CD14-positive monocyte (primary cell): ENCODE measurements at regions of chr20 and their contacts with region 1.

Region 1: GRCh38 chr20:32585011-32585518 is at the start of gene NOL4L:
- DNase-seq: peak in 1 of 3 donors; percentile 35
- H3K4me3 ChIP-seq: peak within 1 kb of the TSS; percentile 37 to 79 (median 74)
- H3K4me3 Mint-ChIP-seq: peak within 1 kb of the TSS; percentile 84 to 96
- H3K27ac ChIP-seq: no peak within 1 kb of the TSS
- H3K27ac Mint-ChIP-seq: peak within 1 kb of the TSS in 4 of 7 donors; percentile 21 to 66 (median 34)
- H3K4me1 ChIP-seq: peaks cover 42 to 47% of the 10 kb centered on the region in 2 donors
- H3K4me1 Mint-ChIP-seq: peaks cover 45% of the 10 kb centered on the region
- H3K27me3 ChIP-seq: peaks cover 6 to 24% of the 10 kb centered on the region in 2 donors
- H3K27me3 Mint-ChIP-seq: peaks cover 26 to 39% (median 33%) of the 10 kb centered on the region in 3 donors
- CTCF ChIP-seq: no peak
- polyA plus RNA-seq, gene NOL4L: 1.1 to 30.9 (median 2.8) TPM

Region 2: GRCh38 chr20:32437391-32438074 is 147.5 kb before region 1 on chr20:
- intact Hi-C with region 1: no loop called
- DNase-seq: peak in 1 of 3 donors; percentile 23
- H3K4me3 ChIP-seq: no peak overlapping the region
- H3K4me3 Mint-ChIP-seq: no peak overlapping the region
- H3K27ac ChIP-seq: no peak overlapping the region
- H3K27ac Mint-ChIP-seq: peak overlapping the region in 1 of 7 donors; percentile 77
- H3K4me1 ChIP-seq: no peaks in the 10 kb centered on the region
- H3K4me1 Mint-ChIP-seq: no peaks in the 10 kb centered on the region
- H3K27me3 ChIP-seq: no peaks in the 10 kb centered on the region
- H3K27me3 Mint-ChIP-seq: no peaks in the 10 kb centered on the region
- CTCF ChIP-seq: no peak

Region 3: DNA sequence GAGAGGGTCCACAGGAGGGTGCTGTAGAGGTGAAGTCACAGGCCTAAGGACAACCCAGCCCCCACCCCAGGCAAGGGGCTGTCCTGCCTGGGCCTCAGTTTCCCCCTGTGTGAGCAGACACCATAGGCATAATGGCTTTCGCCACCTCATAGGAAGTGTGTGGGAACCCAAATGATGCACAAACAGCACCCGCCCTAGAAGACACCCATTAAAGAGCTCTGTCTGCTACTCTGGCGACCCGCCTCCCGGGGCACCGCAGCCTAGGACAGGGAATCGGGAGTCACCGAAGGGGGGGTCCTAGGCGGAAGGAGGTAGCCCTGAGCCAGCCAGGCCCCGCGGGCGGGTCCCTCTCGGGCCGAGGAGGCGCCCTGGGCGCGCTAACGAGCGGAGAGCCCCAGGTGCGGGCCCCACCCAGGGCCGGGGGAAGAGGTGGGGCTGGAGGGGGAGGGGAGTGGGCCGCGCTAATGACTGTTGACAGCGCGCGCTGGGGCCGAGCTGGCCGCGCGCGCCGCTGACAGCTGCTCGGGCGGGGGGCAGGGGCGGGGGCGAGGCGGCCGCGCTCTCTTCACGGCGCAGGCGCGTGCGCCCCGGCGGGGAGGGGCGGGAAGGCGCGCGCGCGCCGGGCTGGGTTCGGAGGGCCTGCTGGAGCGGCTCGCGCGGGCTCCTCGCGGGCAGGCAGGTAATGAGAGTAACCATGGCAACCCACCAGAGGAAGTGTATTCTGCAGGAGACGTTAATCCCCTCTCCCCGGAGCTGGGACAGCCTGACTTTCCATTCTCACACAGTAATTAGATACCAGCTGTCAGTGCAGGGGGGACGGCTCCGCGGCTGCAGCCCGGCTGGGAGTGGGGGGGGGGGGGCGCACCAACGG is 48.9 kb before region 1 on chr20:
- intact Hi-C with region 1: loop called in 1 of 2 experiments (anchors 5 kb)
- DNase-seq: peak in 1 of 3 donors; percentile 33
- H3K4me3 ChIP-seq: peak overlapping the region; percentile 20 to 73 (median 36)
- H3K4me3 Mint-ChIP-seq: peak overlapping the region; percentile 75 to 78
- H3K27ac ChIP-seq: no peak overlapping the region
- H3K27ac Mint-ChIP-seq: peak overlapping the region in 1 of 7 donors; percentile 58
- H3K4me1 ChIP-seq: peaks cover 46 to 56% of the 10 kb centered on the region in 2 donors
- H3K4me1 Mint-ChIP-seq: peaks cover 55% of the 10 kb centered on the region
- H3K27me3 ChIP-seq: no peaks in the 10 kb centered on the region
- H3K27me3 Mint-ChIP-seq: peaks cover 2 to 20% (median 8%) of the 10 kb centered on the region in 3 donors
- CTCF ChIP-seq: no peak

Region 4: GRCh38 chr20:32605167-32605656 is 20.1 kb after region 1 on chr20:
- intact Hi-C with region 1: loop called in 1 of 2 experiments (anchors 2 kb)
- DNase-seq: peak; percentile 70 to 89 (median 81)
- H3K4me3 ChIP-seq: peak overlapping the region in 1 of 3 experiments; percentile 13
- H3K4me3 Mint-ChIP-seq: peak overlapping the region in 1 of 2 donors; percentile 1
- H3K27ac ChIP-seq: peak overlapping the region; percentile 11 to 55
- H3K27ac Mint-ChIP-seq: peak overlapping the region; percentile 47 to 85 (median 75)
- H3K4me1 ChIP-seq: peaks cover 49 to 54% of the 10 kb centered on the region in 2 donors
- H3K4me1 Mint-ChIP-seq: peaks cover 24% of the 10 kb centered on the region
- H3K27me3 ChIP-seq: no peaks in the 10 kb centered on the region
- H3K27me3 Mint-ChIP-seq: peaks cover 0 to 3% (median 2%) of the 10 kb centered on the region in 3 donors
- CTCF ChIP-seq: no peak

Region 5: GRCh38 chr20:32652739-32653526 is 67.9 kb after region 1 on chr20:
- intact Hi-C with region 1: loop called in 1 of 2 experiments (anchors 10 kb)
- DNase-seq: peak; percentile 74 to 80 (median 77)
- H3K4me3 ChIP-seq: no peak overlapping the region
- H3K4me3 Mint-ChIP-seq: peak overlapping the region; percentile 11 to 16
- H3K27ac ChIP-seq: no peak overlapping the region
- H3K27ac Mint-ChIP-seq: peak overlapping the region in 1 of 7 donors; percentile 11
- H3K4me1 ChIP-seq: peaks cover 32 to 47% of the 10 kb centered on the region in 2 donors
- H3K4me1 Mint-ChIP-seq: peaks cover 50% of the 10 kb centered on the region
- H3K27me3 ChIP-seq: no peaks in the 10 kb centered on the region
- H3K27me3 Mint-ChIP-seq: peaks cover 0 to 5% (median 4%) of the 10 kb centered on the region in 3 donors
- CTCF ChIP-seq: peak; percentile 93